Panc1 (cell line): ENCODE measurements at regions of chr6 and their contacts with region 1.

Region 1: GRCh38 chr6:34723203-34723602 is 26.6 kb upstream of the ILRUN start:
- DNase-seq: no peak
- ATAC-seq: no peak
- H3K4me3 ChIP-seq: no peak overlapping the region
- H3K27ac ChIP-seq: peak overlapping the region; percentile 32; the same call in 1 of the 2 replicates
- H3K4me1 ChIP-seq: no peaks in the 10 kb centered on the region
- H3K27me3 ChIP-seq: no peaks in the 10 kb centered on the region
- CTCF ChIP-seq: no peak

Region 2: GRCh38 chr6:34412016-34412415 is 311.2 kb before region 1 on chr6:
- CTCF ChIA-PET with region 1: no interaction called
- POLR2A ChIA-PET with region 1: no interaction called
- in situ Hi-C with region 1: no loop called
- intact Hi-C with region 1: no loop called
- DNase-seq: no peak
- ATAC-seq: no peak
- H3K4me3 ChIP-seq: no peak overlapping the region
- H3K27ac ChIP-seq: no peak overlapping the region
- H3K4me1 ChIP-seq: peaks cover under 1% of the 10 kb centered on the region; the same call in 1 of the 2 replicates
- H3K27me3 ChIP-seq: no peaks in the 10 kb centered on the region
- CTCF ChIP-seq: no peak

Region 3: DNA sequence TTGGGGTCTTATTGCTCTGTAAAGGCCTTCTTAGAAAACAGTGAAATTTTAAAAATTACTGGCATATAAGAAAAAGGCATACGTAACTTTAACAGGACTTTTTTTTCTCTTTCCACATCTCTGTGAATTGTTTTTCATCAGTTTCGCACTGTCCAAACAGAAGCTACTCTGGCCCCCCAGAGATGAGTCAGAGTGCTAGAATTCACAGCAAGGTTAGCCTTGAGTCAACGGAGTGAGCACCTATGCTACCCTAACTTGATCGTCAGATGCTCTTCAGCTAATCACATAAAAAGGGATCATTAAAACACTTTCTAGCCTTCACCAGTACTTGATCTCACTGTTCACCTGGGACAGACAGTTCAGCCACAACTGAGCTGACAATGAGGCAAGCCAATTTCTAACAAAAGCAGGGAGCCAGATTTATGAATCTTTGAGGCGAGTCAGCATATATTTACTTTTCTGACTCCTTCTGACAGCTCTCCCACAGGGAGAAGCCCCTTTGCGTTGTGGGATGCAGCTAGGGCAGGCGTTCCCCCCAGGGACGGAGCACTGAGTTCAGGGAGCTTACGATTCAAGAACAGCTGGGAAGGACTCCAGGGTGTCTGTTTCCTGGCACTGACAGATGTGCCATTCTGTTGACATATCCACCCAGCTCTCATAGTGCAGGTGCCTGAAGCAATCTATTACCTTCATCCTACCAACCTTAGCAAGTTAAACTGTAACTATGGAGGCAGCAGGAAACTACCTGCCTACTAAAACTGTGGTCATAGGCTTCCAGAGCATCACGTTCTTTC is 120.7 kb before region 1 on chr6:
- CTCF ChIA-PET with region 1: no interaction called
- POLR2A ChIA-PET with region 1: no interaction called
- in situ Hi-C with region 1: no loop called
- intact Hi-C with region 1: no loop called
- DNase-seq: no peak
- ATAC-seq: no peak
- H3K4me3 ChIP-seq: no peak overlapping the region
- H3K27ac ChIP-seq: peak overlapping the region; percentile 52
- H3K4me1 ChIP-seq: peaks cover 20% of the 10 kb centered on the region
- H3K27me3 ChIP-seq: no peaks in the 10 kb centered on the region
- CTCF ChIP-seq: no peak

Region 4: DNA sequence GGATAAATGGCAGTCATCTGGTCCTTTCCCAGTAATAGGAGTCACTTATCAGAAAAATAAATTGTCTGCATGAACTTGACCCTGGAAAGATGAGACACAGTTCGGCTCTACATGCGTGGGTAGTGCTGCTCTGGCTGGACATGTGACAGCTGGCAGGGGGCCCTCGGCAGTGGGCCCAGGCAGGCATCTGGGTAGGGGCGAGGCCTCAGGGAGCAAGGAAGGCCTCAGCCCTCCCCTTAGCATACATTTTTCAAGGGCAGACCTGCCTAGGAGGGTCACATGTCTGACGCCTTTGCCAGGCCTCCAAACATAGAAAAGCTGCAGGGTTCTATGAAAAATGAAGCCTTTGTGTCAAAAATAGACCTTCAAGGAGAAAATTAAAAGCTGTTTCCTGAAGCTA is 13.8 kb before region 1 on chr6:
- CTCF ChIA-PET with region 1: no interaction called
- POLR2A ChIA-PET with region 1: interaction called, 10 read pairs
- in situ Hi-C with region 1: no loop called
- intact Hi-C with region 1: no loop called
- DNase-seq: no peak
- ATAC-seq: no peak
- H3K4me3 ChIP-seq: no peak overlapping the region
- H3K27ac ChIP-seq: no peak overlapping the region
- H3K4me1 ChIP-seq: no peaks in the 10 kb centered on the region
- H3K27me3 ChIP-seq: no peaks in the 10 kb centered on the region
- CTCF ChIP-seq: no peak

Region 5: GRCh38 chr6:34912715-34913464 is 189.7 kb after region 1 on chr6:
- CTCF ChIA-PET with region 1: no interaction called
- POLR2A ChIA-PET with region 1: no interaction called
- in situ Hi-C with region 1: no loop called
- intact Hi-C with region 1: no loop called
- DNase-seq: no peak
- ATAC-seq: 0 out of 2 replicates have a peak, but pooled peaks have one; percentile 60
- H3K4me3 ChIP-seq: no peak overlapping the region
- H3K27ac ChIP-seq: no peak overlapping the region
- H3K4me1 ChIP-seq: 0 out of 2 replicates have a peak, but pooled peaks cover 9% of the 10 kb centered on the region
- H3K27me3 ChIP-seq: no peaks in the 10 kb centered on the region
- CTCF ChIP-seq: no peak